Caco-2 (cell line): ENCODE measurements at regions of chr20 and their contacts with region 1.

Region 1: DNA sequence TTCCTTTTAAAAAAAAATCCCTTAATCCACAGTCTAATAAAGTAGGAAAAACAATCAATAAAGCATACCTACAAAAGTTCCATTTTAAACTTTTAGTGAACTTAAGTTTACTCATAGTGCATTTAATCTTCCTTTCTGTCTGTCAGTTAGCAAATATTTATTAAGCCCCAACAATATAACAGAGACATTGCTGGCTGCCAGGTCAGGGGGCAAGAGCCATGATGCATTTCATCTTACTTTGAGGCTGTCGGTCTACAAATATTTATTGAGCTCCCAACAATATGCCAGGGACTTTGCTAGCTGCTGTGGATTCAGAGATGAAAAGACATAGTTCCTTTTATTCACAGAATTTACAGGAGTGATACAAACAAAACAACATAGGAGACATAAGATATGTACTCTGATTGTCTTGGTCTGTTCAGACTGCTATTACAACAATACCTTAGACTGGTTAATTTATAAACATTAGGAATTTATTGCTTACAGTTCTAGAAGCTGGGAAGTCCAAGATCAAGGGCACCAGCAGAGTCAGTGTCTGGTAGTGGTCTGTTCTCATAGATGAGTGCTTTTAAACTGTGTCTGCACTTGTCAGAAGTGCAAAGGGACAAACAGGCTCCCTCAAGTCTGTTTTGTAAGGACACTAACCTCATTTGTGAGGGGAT is 118.6 kb downstream of the PLCB1 start:
- DNase-seq: peak; percentile 73 to 78
- H3K4me3 ChIP-seq: no peak overlapping the region
- H3K4me3 Mint-ChIP-seq: peak overlapping the region; percentile 25
- H3K27ac Mint-ChIP-seq: peak overlapping the region; percentile 31
- H3K4me1 ChIP-seq: peaks cover 31% of the 10 kb centered on the region
- H3K4me1 Mint-ChIP-seq: peaks cover 39% of the 10 kb centered on the region
- H3K27me3 ChIP-seq: no peaks in the 10 kb centered on the region
- H3K27me3 Mint-ChIP-seq: no peaks in the 10 kb centered on the region
- CTCF ChIP-seq: no peak

Region 2: GRCh38 chr20:8231038-8231437 is 19.6 kb before region 1 on chr20:
- CTCF ChIA-PET with region 1: no interaction called
- POLR2A ChIA-PET with region 1: no interaction called
- intact Hi-C with region 1: loop called (anchors 1 kb)
- DNase-seq: peak in 1 of 2 experiments; percentile 38
- H3K4me3 ChIP-seq: no peak overlapping the region
- H3K4me3 Mint-ChIP-seq: no peak overlapping the region
- H3K27ac Mint-ChIP-seq: peak overlapping the region; percentile 6
- H3K4me1 ChIP-seq: peaks cover 19% of the 10 kb centered on the region
- H3K4me1 Mint-ChIP-seq: peaks cover 36% of the 10 kb centered on the region
- H3K27me3 ChIP-seq: no peaks in the 10 kb centered on the region
- H3K27me3 Mint-ChIP-seq: no peaks in the 10 kb centered on the region
- CTCF ChIP-seq: no peak